ENCODE measurements at regions of chr2 and their contacts with region 1.

Region 1: GRCh38 chr2:132752421-132753206 is 82.6 kb upstream of the LYPD1 start:
- DNase-seq: no peak
- ATAC-seq: no peak
- H3K4me3 Mint-ChIP-seq: no peak overlapping the region
- H3K27ac Mint-ChIP-seq: no peak overlapping the region
- H3K4me1 Mint-ChIP-seq: no peaks in the 10 kb centered on the region
- H3K27me3 Mint-ChIP-seq: no peaks in the 10 kb centered on the region
- CTCF ChIP-seq: no peak

Region 2: DNA sequence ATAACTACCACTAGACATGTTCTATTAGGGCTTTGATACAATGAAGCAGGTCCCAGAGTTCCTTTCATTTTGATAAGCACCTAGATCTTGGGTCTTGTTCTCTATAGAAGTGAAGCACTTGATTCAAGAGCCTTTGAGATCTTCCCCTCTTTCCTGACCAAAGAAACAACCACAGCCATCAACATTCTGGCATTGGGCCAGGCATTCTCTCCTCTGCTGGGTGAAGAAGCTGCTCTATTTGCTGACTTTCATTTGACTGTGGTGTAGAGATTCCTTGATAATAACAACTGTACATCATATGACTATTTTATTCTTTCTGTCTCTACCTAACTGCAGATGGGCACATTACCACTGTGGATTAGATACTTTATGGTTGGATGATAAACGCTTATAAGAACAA is 14.0 kb after region 1 on chr2:
- CTCF ChIA-PET with region 1: no interaction called
- POLR2A ChIA-PET with region 1: no interaction called
- intact Hi-C with region 1: loop called (anchors 1 kb)
- DNase-seq: no peak
- ATAC-seq: no peak
- H3K4me3 Mint-ChIP-seq: no peak overlapping the region
- H3K27ac Mint-ChIP-seq: no peak overlapping the region
- H3K4me1 Mint-ChIP-seq: no peaks in the 10 kb centered on the region
- H3K27me3 Mint-ChIP-seq: no peaks in the 10 kb centered on the region
- CTCF ChIP-seq: no peak